ENCODE measurements at regions of chr6 and their contacts with region 1.

Region 1: GRCh38 chr6:158649289-158650143 is at the start of gene SYTL3:
- DNase-seq: peak; percentile 58 to 93 (median 90)
- ATAC-seq: peak; percentile 78
- H3K4me3 ChIP-seq: peak within 1 kb of the TSS; percentile 44
- H3K4me3 Mint-ChIP-seq: peak within 1 kb of the TSS; percentile 66 to 87 (median 80)
- H3K27ac ChIP-seq: peak within 1 kb of the TSS; percentile 83
- H3K27ac Mint-ChIP-seq: peak within 1 kb of the TSS; percentile 90 to 99 (median 96)
- H3K4me1 ChIP-seq: peaks cover 38 to 46% of the 10 kb centered on the region in 2 donors
- H3K4me1 Mint-ChIP-seq: peaks cover 42 to 75% (median 67%) of the 10 kb centered on the region in 7 donors
- H3K27me3 ChIP-seq: no peaks in the 10 kb centered on the region
- H3K27me3 Mint-ChIP-seq: no peaks in the 10 kb centered on the region
- total RNA-seq, gene SYTL3: 25.8 to 67.0 (median 31.1) TPM

Region 2: GRCh38 chr6:157764178-157765033 is 885.1 kb before region 1 on chr6:
- CTCF ChIA-PET with region 1: no interaction called
- POLR2A ChIA-PET with region 1: no interaction called
- intact Hi-C with region 1: loop called in 1 of 2 experiments (anchors 1 kb)
- DNase-seq: peak; percentile 58 to 96 (median 93)
- ATAC-seq: peak; percentile 87
- H3K4me3 ChIP-seq: peak overlapping the region; percentile 49
- H3K4me3 Mint-ChIP-seq: peak overlapping the region; percentile 71 to 84 (median 78)
- H3K27ac ChIP-seq: peak overlapping the region; percentile 56
- H3K27ac Mint-ChIP-seq: peak overlapping the region; percentile 90 to 99 (median 96)
- H3K4me1 ChIP-seq: peaks cover 27 to 65% of the 10 kb centered on the region in 2 donors
- H3K4me1 Mint-ChIP-seq: peaks cover 43 to 91% (median 75%) of the 10 kb centered on the region in 7 donors
- H3K27me3 ChIP-seq: no peaks in the 10 kb centered on the region
- H3K27me3 Mint-ChIP-seq: peaks cover 0 to 31% (median 0%) of the 10 kb centered on the region in 5 donors

Region 3: GRCh38 chr6:158168040-158168289 is 481.6 kb before region 1 on chr6 and contains the start of gene SERAC1:
- CTCF ChIA-PET with region 1: no interaction called
- POLR2A ChIA-PET with region 1: no interaction called
- intact Hi-C with region 1: loop called in 1 of 2 experiments (anchors 5 kb)
- DNase-seq: no peak
- ATAC-seq: peak; percentile 59
- H3K4me3 ChIP-seq: peak within 1 kb of the TSS; percentile 88
- H3K4me3 Mint-ChIP-seq: peak within 1 kb of the TSS; percentile 81 to 96 (median 96)
- H3K27ac ChIP-seq: peak within 1 kb of the TSS; percentile 96
- H3K27ac Mint-ChIP-seq: peak within 1 kb of the TSS; percentile 90 to 99 (median 98)
- H3K4me1 ChIP-seq: peaks cover 0 to 5% of the 10 kb centered on the region in 2 donors
- H3K4me1 Mint-ChIP-seq: peaks cover 14 to 46% (median 27%) of the 10 kb centered on the region in 7 donors
- H3K27me3 ChIP-seq: no peaks in the 10 kb centered on the region
- H3K27me3 Mint-ChIP-seq: no peaks in the 10 kb centered on the region
- total RNA-seq, gene SERAC1: 2.4 to 5.4 (median 4.6) TPM

Region 4: GRCh38 chr6:158631678-158632537 is 17.6 kb before region 1 on chr6:
- CTCF ChIA-PET with region 1: interaction called, 4 read pairs
- POLR2A ChIA-PET with region 1: interaction called, 11 read pairs
- intact Hi-C with region 1: loop called in 1 of 2 experiments (anchors 1 kb)
- DNase-seq: no peak
- ATAC-seq: peak; percentile 47
- H3K4me3 ChIP-seq: no peak overlapping the region
- H3K4me3 Mint-ChIP-seq: no peak overlapping the region
- H3K27ac ChIP-seq: peak overlapping the region; percentile 49
- H3K27ac Mint-ChIP-seq: peak overlapping the region; percentile 52 to 91 (median 83)
- H3K4me1 ChIP-seq: peaks cover 15 to 16% of the 10 kb centered on the region in 2 donors
- H3K4me1 Mint-ChIP-seq: peaks cover 21 to 61% (median 48%) of the 10 kb centered on the region in 7 donors
- H3K27me3 ChIP-seq: no peaks in the 10 kb centered on the region
- H3K27me3 Mint-ChIP-seq: no peaks in the 10 kb centered on the region

Region 5: GRCh38 chr6:158718461-158719046 is 69.0 kb after region 1 on chr6:
- CTCF ChIA-PET with region 1: no interaction called
- POLR2A ChIA-PET with region 1: interaction called, 3 read pairs
- intact Hi-C with region 1: loop called in 1 of 2 experiments (anchors 2 kb)
- DNase-seq: no peak
- ATAC-seq: no peak
- H3K4me3 ChIP-seq: no peak overlapping the region
- H3K4me3 Mint-ChIP-seq: peak overlapping the region in 2 of 10 donors; percentile 3 to 56
- H3K27ac ChIP-seq: no peak overlapping the region
- H3K27ac Mint-ChIP-seq: peak overlapping the region in 4 of 9 donors; percentile 73 to 90 (median 80)
- H3K4me1 ChIP-seq: peaks cover 10 to 58% of the 10 kb centered on the region in 2 donors
- H3K4me1 Mint-ChIP-seq: peaks cover 28 to 71% (median 36%) of the 10 kb centered on the region in 7 donors
- H3K27me3 ChIP-seq: no peaks in the 10 kb centered on the region
- H3K27me3 Mint-ChIP-seq: no peaks in the 10 kb centered on the region

Region 6: DNA sequence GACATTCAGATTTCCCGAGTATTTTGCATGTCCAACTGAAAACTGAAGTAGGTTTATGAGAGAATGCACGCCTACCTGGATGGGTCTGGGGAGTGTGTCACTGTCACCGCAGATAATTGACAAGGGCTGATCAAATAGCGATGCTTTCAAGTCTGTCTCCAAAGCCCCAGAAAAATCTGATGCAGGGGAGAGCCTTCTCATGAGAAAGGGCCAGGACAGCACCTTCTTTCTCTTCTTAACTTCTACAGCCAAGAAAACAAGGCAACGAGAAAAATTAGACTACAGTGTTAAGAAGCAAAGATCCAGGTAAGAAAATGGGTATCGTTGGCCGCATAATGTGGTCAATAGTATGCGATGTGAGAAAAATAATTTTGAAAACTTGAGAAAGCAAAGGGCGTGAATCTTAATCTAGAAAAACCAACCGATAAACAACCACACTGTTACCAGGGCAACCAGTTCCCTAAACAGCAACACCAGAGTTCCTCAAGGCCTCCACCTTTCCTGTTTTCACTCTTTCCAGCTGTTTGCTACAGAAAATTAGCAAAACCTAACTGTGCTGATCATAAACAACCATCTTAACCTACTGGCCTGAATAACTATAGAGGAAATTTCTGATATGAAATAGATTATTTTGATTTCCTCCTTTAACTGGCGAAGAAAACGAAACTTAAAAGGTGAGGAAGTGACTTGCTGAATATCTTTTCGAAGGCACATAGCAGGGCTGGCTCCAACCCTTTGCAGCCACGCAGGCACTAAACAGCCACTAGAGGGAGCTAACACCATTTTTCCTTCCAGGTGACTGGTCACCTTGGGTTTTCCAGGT is 392.7 kb after region 1 on chr6:
- CTCF ChIA-PET with region 1: no interaction called
- POLR2A ChIA-PET with region 1: no interaction called
- intact Hi-C with region 1: loop called (anchors 1 kb)
- DNase-seq: peak; percentile 42 to 92 (median 86)
- ATAC-seq: peak; percentile 70
- H3K4me3 ChIP-seq: peak overlapping the region; percentile 88
- H3K4me3 Mint-ChIP-seq: peak overlapping the region; percentile 92 to 100 (median 99)
- H3K27ac ChIP-seq: peak overlapping the region; percentile 92
- H3K27ac Mint-ChIP-seq: peak overlapping the region; percentile 94 to 100 (median 98)
- H3K4me1 ChIP-seq: peaks cover 50 to 58% of the 10 kb centered on the region in 2 donors
- H3K4me1 Mint-ChIP-seq: peaks cover 44 to 68% (median 64%) of the 10 kb centered on the region in 7 donors
- H3K27me3 ChIP-seq: no peaks in the 10 kb centered on the region
- H3K27me3 Mint-ChIP-seq: no peaks in the 10 kb centered on the region